Activated B cell treated with CpG ODN at 0.5 μM for 24 hours (primary cell): ENCODE measurements at regions of chr1 and their contacts with region 1.

Region 1: DNA sequence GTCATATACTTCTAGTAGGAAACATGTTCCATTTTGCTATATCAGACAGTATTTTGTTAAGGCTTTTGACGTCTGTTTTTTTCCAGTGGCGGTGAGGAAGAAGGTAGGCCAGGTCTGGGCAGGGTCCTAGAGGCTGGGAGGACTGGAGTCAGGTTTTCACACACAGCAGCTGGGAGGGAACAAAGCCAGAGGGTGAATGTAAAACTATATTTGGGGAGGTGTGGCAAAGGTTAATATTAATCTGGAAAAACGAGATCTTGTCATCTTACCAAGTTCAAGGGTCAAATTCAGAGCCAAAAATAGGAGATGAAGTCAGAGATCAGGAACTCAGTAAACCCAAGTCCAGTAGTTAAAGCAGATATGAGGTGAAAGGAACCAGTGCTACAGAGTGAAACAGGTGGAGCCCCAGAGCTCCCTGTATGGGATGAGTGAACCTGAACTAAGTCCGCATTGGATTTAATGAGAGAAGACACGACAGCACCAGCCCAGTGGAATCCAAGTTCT is 10.7 kb upstream of the OTUD7B start:
- DNase-seq: no peak
- ATAC-seq: no peak
- H3K4me3 Mint-ChIP-seq: no peak overlapping the region
- H3K27ac Mint-ChIP-seq: no peak overlapping the region
- H3K4me1 Mint-ChIP-seq: peaks cover 9% of the 10 kb centered on the region
- H3K27me3 Mint-ChIP-seq: peaks cover 15% of the 10 kb centered on the region
- CTCF ChIP-seq: no peak

Region 2: GRCh38 chr1:149986486-149987294 is 34.6 kb before region 1 on chr1:
- CTCF ChIA-PET with region 1: no interaction called
- POLR2A ChIA-PET with region 1: no interaction called
- intact Hi-C with region 1: loop called (anchors 5 kb)
- DNase-seq: no peak
- ATAC-seq: no peak
- H3K4me3 Mint-ChIP-seq: no peak overlapping the region
- H3K27ac Mint-ChIP-seq: no peak overlapping the region
- H3K4me1 Mint-ChIP-seq: no peaks in the 10 kb centered on the region
- H3K27me3 Mint-ChIP-seq: peaks cover 12% of the 10 kb centered on the region
- CTCF ChIP-seq: no peak